ENCODE measurements at regions of chr11 and their contacts with region 1.

Region 1: DNA sequence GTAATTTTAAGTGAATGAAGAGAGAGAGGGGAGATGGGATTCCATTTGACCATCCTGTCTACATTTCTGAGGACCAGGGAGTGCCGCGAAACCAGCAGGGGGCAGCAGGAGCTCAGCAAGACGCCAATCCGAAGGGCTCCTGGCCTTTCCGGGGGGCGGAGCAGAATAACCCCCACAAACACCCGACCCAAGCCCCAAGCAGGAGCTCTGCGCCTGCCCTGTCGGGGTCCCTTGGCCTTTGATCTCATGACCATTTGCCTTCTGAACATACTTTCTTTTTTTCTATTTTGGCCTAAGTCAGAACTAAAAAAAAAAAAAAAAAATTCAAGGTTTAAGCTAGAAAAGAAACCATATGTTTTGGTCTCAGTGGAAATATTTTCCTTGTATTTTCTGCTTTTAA is 21.9 kb upstream of the SCN2B start:
- DNase-seq: peak; percentile 78 to 83 (median 80)
- ATAC-seq: peak; percentile 98
- H3K4me3 ChIP-seq: no peak overlapping the region
- H3K27ac ChIP-seq: no peak overlapping the region
- H3K4me1 ChIP-seq: 0 out of 5 replicates have a peak, but pooled peaks cover 0 to 3% of the 10 kb centered on the region in 2 experiments
- H3K27me3 ChIP-seq: peaks cover 0 to 33% of the 10 kb centered on the region in 2 experiments; a peak in 4 of 5 replicates
- CTCF ChIP-seq: peak; percentile 85 to 90 (median 86)
- EP300 ChIP-seq: no peak
- POLR2A ChIP-seq: no peak
- RAD21 ChIP-seq: peak; percentile 95

Region 2: DNA sequence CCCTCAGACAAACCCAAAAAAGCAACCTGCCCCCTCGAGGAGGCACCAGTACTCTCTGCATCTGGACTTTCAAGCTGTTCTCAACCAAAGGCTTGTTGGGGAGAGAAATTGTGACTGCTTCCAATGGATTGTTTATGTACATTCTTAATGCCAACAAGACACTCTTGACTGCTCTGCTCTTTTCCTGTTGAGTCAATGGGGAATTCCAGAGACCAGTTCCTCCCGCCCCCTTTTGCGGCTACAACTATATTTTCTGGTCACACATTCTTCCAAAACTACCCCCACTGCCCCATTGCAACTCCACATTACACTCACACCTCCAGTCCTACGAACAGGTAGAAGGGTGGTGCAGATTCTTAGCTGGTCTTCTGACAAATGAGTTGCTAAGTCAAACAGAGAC is 588.3 kb before region 1 on chr11:
- CTCF ChIA-PET with region 1: no interaction called
- POLR2A ChIA-PET with region 1: no interaction called
- in situ Hi-C with region 1: no loop called
- intact Hi-C with region 1: no loop called
- DNase-seq: no peak
- ATAC-seq: no peak
- H3K4me3 ChIP-seq: no peak overlapping the region
- H3K27ac ChIP-seq: no peak overlapping the region
- H3K4me1 ChIP-seq: no peaks in the 10 kb centered on the region
- H3K27me3 ChIP-seq: peaks cover 5 to 33% of the 10 kb centered on the region in 2 experiments; a peak in 3 of 5 replicates
- CTCF ChIP-seq: no peak
- EP300 ChIP-seq: no peak
- POLR2A ChIP-seq: no peak
- RAD21 ChIP-seq: no peak

Region 3: DNA sequence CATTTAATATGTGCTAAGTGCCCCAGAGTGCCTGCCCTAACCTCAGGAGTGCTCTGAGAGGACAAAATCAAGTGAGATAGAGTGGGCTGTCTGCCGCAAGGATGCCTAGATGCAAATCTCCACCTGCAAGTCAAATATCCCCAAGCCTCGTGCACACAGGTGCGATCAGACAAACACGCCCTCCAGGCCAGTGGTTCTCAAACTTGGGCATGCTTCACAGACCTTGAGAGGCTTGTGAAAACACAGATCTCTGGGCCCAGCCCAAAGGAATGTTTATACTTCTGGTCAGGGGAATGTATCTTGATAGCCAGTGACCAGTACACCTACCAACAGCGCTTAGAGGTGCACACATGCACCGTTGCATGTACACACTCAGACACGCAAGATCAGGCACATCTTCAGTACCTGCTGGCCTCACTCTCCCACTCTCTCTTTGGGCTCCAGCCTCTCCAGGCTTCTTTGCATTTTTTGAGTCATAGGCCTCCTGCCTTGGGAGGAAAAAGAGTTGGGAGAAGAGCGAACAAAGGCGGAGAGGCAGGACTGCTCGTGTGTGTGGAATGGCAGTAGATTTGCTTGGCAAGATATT is 310.3 kb before region 1 on chr11:
- CTCF ChIA-PET with region 1: no interaction called
- POLR2A ChIA-PET with region 1: no interaction called
- in situ Hi-C with region 1: no loop called
- intact Hi-C with region 1: no loop called
- DNase-seq: no peak
- ATAC-seq: no peak
- H3K4me3 ChIP-seq: no peak overlapping the region
- H3K27ac ChIP-seq: no peak overlapping the region
- H3K4me1 ChIP-seq: peaks cover 0 to 7% of the 10 kb centered on the region in 2 experiments; a peak in 3 of 5 replicates
- H3K27me3 ChIP-seq: peaks cover 15 to 41% of the 10 kb centered on the region in 2 experiments; a peak in 4 of 5 replicates
- CTCF ChIP-seq: no peak
- EP300 ChIP-seq: no peak
- POLR2A ChIP-seq: no peak
- RAD21 ChIP-seq: no peak

Region 4: GRCh38 chr11:118258410-118258809 is 60.0 kb after region 1 on chr11:
- CTCF ChIA-PET with region 1: no interaction called
- POLR2A ChIA-PET with region 1: no interaction called
- in situ Hi-C with region 1: no loop called
- intact Hi-C with region 1: loop called (anchors 5 kb)
- DNase-seq: peak in 1 of 4 experiments; percentile 13
- ATAC-seq: no peak; the same call in 1 of the 3 replicates
- H3K4me3 ChIP-seq: no peak overlapping the region
- H3K27ac ChIP-seq: no peak overlapping the region
- H3K4me1 ChIP-seq: no peaks in the 10 kb centered on the region
- H3K27me3 ChIP-seq: peaks cover 11 to 13% of the 10 kb centered on the region in 2 experiments
- CTCF ChIP-seq: peak; percentile 8 to 41 (median 31); a peak in 2 of 6 replicates
- EP300 ChIP-seq: no peak
- POLR2A ChIP-seq: no peak
- RAD21 ChIP-seq: peak in 1 of 2 experiments; percentile 50; a peak in 2 of 4 replicates

Region 5: GRCh38 chr11:118295834-118296454 is 97.6 kb after region 1 on chr11:
- CTCF ChIA-PET with region 1: interaction called, 39 read pairs
- POLR2A ChIA-PET with region 1: no interaction called
- in situ Hi-C with region 1: loop called (anchors 5 kb)
- intact Hi-C with region 1: loop called (anchors 2 kb)
- DNase-seq: peak in 2 of 4 experiments; percentile 32 to 50
- ATAC-seq: peak; percentile 77
- H3K4me3 ChIP-seq: no peak overlapping the region
- H3K27ac ChIP-seq: no peak overlapping the region
- H3K4me1 ChIP-seq: no peaks in the 10 kb centered on the region; a peak in 1 of 5 replicates
- H3K27me3 ChIP-seq: peaks cover 4 to 10% of the 10 kb centered on the region in 2 experiments; a peak in 2 of 5 replicates
- CTCF ChIP-seq: peak; percentile 57 to 81 (median 61); a peak in 5 of 6 replicates
- EP300 ChIP-seq: no peak
- POLR2A ChIP-seq: no peak
- RAD21 ChIP-seq: peak; percentile 70 to 85

Region 6: DNA sequence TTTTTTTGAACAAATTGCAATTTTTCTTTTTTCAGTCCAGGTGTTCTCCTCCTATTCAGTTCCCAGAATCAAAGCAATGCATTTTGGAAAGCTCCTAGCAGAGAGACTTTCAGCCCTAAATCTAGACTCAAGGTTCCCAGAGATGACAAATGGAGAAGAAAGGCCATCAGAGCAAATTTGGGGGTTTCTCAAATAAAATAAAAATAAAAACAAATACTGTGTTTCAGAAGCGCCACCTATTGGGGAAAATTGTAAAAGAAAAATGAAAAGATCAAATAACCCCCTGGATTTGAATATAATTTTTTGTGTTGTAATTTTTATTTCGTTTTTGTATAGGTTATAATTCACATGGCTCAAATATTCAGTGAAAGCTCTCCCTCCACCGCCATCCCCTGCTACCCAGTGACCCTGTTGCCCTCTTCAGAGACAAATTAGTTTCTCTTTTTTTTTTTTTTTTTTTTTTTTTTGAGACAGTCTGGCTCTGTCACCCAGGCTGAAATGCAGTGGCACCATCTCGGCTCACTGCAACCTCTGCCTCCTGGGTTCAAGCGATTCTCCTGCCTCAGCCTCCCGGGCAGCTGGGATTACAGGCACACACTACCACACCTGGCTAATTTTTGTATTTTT is 154.8 kb after region 1 on chr11:
- CTCF ChIA-PET with region 1: interaction called, 5 read pairs
- POLR2A ChIA-PET with region 1: no interaction called
- in situ Hi-C with region 1: no loop called
- intact Hi-C with region 1: loop called (anchors 2 kb)
- DNase-seq: peak in 2 of 4 experiments; percentile 16 to 37
- ATAC-seq: no peak
- H3K4me3 ChIP-seq: no peak overlapping the region
- H3K27ac ChIP-seq: no peak overlapping the region
- H3K4me1 ChIP-seq: peaks cover 0 to 6% of the 10 kb centered on the region in 2 experiments; a peak in 1 of 5 replicates
- H3K27me3 ChIP-seq: peaks cover 0 to 4% of the 10 kb centered on the region in 2 experiments; a peak in 1 of 5 replicates
- CTCF ChIP-seq: peak; percentile 40 to 75 (median 46); a peak in 4 of 6 replicates
- EP300 ChIP-seq: no peak
- POLR2A ChIP-seq: no peak
- RAD21 ChIP-seq: peak; percentile 75 to 76

Region 7: GRCh38 chr11:118565051-118565450 is 366.7 kb after region 1 on chr11:
- CTCF ChIA-PET with region 1: no interaction called
- POLR2A ChIA-PET with region 1: no interaction called
- in situ Hi-C with region 1: no loop called
- intact Hi-C with region 1: loop called (anchors 1 kb)
- DNase-seq: no peak
- ATAC-seq: no peak
- H3K4me3 ChIP-seq: no peak overlapping the region
- H3K27ac ChIP-seq: no peak overlapping the region
- H3K4me1 ChIP-seq: peaks cover 0 to 5% of the 10 kb centered on the region in 2 experiments
- H3K27me3 ChIP-seq: no peaks in the 10 kb centered on the region
- CTCF ChIP-seq: no peak
- EP300 ChIP-seq: no peak
- POLR2A ChIP-seq: no peak
- RAD21 ChIP-seq: no peak